HCT116 (cell line): ENCODE measurements at regions of chr1 and their contacts with region 1.

Region 1: GRCh38 chr1:110700767-110701166 is 26.0 kb upstream of the KCNA3 start:
- DNase-seq: no peak
- ATAC-seq: no peak
- H3K4me3 ChIP-seq: no peak overlapping the region
- H3K27ac ChIP-seq: no peak overlapping the region
- H3K4me1 ChIP-seq: no peaks in the 10 kb centered on the region
- H3K27me3 ChIP-seq: peaks cover 38% of the 10 kb centered on the region
- CTCF ChIP-seq: no peak
- POLR2A ChIP-seq: no peak
- RAD21 ChIP-seq: no peak

Region 2: DNA sequence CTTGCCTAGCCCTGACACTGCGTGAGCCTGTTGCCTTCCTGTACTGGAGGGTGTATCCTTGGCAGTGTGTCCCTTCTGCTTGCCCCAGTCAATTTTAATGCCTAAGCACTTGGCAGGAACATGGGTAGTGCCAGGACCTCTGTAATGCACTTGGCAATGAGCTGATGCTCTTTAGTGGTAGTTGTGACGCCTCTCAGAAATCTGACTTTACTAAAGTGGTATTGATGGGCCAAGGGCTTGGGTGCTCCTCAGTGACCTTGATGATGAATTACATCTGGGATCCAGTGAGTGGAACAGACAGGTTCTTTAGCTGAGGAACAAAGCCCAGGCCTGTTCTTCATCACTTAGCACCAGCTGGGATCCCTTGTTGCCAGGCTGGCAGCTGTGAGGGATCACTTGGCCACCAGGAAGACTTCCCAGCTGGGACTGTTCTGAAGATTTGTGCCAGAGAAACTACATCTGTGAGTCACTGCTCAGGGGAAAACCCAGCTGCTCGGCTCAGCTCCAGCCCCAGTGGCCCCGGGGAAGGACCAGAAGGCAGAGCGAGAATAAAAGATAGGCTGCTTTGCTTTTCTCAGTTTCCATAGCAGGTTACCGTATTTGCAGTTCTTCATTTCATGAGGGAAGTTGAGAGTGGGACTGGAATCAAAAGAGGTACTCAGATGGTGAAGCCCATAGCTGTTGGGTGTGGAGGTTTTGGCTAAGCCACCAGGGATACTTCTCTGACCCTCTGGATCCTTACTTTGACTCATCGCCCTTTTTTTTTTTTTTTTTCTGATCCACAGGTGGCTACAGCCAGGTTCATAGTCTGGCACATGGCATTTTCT is 66.1 kb before region 1 on chr1:
- CTCF ChIA-PET with region 1: no interaction called
- POLR2A ChIA-PET with region 1: no interaction called
- RAD21 ChIA-PET with region 1: no interaction called
- intact Hi-C with region 1: no loop called
- DNase-seq: no peak
- ATAC-seq: no peak
- H3K4me3 ChIP-seq: no peak overlapping the region
- H3K27ac ChIP-seq: no peak overlapping the region
- H3K4me1 ChIP-seq: 0 out of 4 replicates have a peak, but pooled peaks cover 0 to 3% of the 10 kb centered on the region in 2 experiments
- H3K27me3 ChIP-seq: peaks cover 41% of the 10 kb centered on the region
- CTCF ChIP-seq: no peak
- POLR2A ChIP-seq: no peak
- RAD21 ChIP-seq: no peak

Region 3: GRCh38 chr1:110668549-110668948 is 32.2 kb before region 1 on chr1:
- CTCF ChIA-PET with region 1: no interaction called
- POLR2A ChIA-PET with region 1: no interaction called
- RAD21 ChIA-PET with region 1: no interaction called
- intact Hi-C with region 1: loop called (anchors 5 kb)
- DNase-seq: no peak
- ATAC-seq: no peak
- H3K4me3 ChIP-seq: no peak overlapping the region
- H3K27ac ChIP-seq: no peak overlapping the region
- H3K4me1 ChIP-seq: no peaks in the 10 kb centered on the region
- H3K27me3 ChIP-seq: peaks cover 61% of the 10 kb centered on the region
- CTCF ChIP-seq: no peak
- POLR2A ChIP-seq: no peak
- RAD21 ChIP-seq: no peak